Sciatic nerve (tissue), 2 donors: ENCODE measurements at regions of chr3 and their contacts with region 1.

Region 1: DNA sequence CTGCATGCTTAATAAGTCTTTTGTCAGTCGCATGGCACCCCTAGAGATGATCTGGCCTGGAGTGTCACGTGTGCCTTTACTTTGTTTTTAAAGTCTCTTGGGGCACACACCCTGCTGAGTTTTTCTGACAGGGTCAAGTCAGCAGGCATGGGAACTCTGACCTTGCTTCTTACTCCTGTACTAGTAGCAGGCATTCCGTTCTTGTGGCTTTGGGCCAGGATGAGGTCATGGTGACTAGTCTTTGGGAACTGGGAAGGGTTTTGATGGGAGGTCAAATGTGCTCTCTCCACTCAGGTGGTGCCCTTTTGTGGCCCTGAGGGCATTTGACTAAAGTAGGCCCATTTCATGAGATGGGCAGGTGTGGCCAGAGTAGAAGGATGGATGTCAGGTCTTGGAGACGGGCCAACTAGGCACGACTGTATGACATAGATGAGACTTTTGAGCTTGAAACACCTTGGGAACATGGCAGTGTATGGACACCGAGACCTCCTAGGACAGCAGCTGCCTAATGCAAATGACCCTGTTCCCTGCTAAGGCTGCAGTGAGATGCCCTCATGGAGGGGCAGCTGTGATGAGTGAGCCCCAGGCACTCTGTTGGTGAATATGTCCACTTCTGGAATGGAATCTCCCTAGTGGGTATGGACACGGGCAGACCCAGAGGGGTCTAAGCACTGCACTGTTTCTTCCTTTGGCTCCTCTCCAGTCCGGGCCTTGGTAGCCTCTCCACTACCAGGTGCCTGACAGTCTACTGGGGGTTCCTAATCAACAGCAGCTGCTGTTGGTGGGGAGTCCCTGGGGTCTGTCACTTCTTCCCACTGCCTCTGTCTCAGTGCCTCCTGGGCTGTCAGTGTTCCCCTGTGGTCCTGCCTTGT is 16.4 kb downstream of the SRPRB start:
- DNase-seq: peak; percentile 68
- ATAC-seq: peak; percentile 54

Region 2: GRCh38 chr3:133271539-133271938 is 550.5 kb before region 1 on chr3:
- intact Hi-C with region 1: no loop called
- DNase-seq: no peak
- ATAC-seq: no peak

Region 3: DNA sequence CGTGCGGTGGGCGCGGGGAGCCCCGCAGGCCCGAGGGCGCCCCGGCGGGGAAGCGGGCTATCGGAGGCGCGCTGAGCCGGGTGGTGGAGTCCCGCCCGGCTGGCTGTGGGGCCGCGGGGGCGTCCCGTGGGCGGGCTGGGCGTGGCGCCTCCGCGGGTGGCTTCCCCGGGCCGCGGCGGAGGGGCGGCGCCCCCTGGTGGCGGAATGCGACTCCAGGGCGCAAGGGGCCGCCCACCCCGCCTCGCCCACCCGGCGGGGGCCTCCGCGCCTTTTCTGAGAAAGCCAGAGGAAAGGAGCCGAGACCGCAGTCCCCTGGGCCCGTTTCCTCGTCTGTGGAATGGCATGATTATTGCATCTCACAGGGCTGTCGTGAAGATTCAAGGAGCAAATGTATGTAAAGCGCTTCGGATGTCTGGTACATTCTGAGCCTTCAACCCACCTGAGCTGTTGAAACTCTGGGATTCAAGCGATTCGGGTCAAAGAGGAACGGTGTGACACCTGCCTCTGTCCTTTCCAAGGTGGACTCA is 105.6 kb after region 1 on chr3:
- intact Hi-C with region 1: loop called (anchors 5 kb)
- DNase-seq: no peak
- ATAC-seq: peak; percentile 78